Kidney (tissue), 22 donors: ENCODE measurements at regions of chr13 and their contacts with region 1.

Region 1: DNA sequence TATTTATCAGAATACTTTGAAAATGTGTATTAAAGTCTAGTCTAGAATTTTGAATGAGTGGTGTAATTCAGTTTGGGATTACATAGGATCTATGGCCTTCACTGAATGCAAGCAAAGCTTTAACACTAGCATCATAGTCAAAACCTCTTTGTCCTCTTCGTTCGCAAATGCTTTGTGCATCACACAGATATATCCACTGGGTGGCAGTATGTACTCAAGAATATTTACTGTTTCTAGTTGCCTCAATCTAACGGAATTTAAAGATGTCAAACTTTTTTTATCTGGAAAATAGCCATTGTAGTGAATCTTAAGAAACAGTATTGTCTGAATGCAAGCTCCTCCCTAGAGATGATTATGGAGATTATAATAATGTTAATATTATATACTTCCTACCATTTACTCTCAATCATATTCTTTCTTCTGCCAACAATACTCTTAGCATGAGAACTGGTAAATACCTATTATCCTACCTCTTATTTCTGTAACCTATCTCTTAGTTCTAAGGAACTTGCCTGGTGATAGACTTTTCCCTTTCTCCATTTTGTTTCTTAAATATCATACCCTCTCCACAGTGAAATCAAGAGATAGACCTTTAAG is 25.8 kb downstream of the LACC1 start:
- DNase-seq: peak in 4 of 5 donors; percentile 43 to 89 (median 66)
- H3K4me3 ChIP-seq: no peak overlapping the region
- H3K27ac ChIP-seq: no peak overlapping the region
- H3K4me1 ChIP-seq: no peaks in the 10 kb centered on the region
- H3K27me3 ChIP-seq: no peaks in the 10 kb centered on the region
- CTCF ChIP-seq: peak; percentile 93

Region 2: DNA sequence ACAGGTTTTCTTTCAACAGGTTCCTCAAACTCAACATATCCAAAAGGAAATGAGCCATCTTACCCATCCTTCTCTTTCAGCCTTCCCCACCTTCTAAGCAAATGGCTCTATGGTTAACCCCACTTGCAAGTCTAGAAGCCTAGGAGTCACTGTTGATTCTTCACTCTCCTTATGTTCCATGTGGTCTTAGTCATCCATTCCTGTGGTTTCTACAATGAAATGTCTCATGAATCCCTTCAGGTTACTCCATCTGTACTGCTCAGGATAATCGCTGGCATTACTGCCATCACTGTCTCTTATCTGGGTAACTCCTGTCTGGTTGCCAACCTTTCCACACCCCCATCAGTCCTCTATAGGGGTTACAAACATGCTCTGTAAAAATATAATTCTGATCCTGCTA is 500.1 kb before region 1 on chr13:
- intact Hi-C with region 1: no loop called
- DNase-seq: no peak
- H3K4me3 ChIP-seq: no peak overlapping the region
- H3K27ac ChIP-seq: no peak overlapping the region
- H3K4me1 ChIP-seq: no peaks in the 10 kb centered on the region
- H3K27me3 ChIP-seq: no peaks in the 10 kb centered on the region
- CTCF ChIP-seq: no peak

Region 3: GRCh38 chr13:43698758-43699157 is 206.8 kb before region 1 on chr13:
- intact Hi-C with region 1: no loop called
- DNase-seq: no peak
- H3K4me3 ChIP-seq: no peak overlapping the region
- H3K27ac ChIP-seq: no peak overlapping the region
- H3K4me1 ChIP-seq: no peaks in the 10 kb centered on the region
- H3K27me3 ChIP-seq: no peaks in the 10 kb centered on the region
- CTCF ChIP-seq: no peak

Region 4: DNA sequence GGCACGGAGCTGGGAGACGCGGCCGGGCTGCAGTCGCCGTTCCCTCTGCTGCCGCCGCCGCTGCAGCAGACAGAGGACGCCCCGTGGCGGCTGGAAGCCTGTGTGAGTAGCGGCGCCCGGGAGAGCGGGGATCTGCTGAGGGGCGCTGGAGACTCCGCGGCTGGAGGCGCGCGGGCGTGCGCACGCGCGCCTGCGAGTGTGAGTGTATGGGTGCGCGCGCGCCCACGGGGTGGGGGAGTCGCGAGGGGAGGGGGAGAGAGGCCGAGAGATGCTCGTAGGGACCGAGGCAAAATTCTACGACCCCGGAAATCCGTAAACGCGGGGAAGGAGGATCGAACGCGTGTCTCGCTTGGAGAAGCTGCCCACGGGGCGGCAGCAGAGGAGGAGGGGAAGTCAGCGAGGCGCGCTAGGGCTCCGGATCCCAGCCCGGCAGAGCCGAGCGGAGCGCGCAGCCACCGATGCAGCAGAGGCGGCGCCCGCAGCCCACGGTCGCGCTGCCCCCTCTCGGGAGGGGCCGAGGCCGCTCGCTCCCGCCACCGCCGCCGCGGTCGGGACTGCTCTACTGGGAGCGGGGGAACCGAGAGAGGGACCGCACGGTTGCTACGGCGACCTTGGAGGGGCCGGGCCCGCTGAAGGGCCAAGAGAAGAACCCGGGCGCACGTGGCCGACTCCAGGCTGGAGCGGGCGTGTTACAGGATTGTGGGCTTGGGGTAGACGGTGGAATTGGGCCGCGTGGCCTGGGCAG is 118.6 kb before region 1 on chr13 and contains the start of gene ENOX1:
- intact Hi-C with region 1: no loop called
- DNase-seq: peak; percentile 85 to 95 (median 91)
- H3K4me3 ChIP-seq: peak within 1 kb of the TSS; percentile 51 to 71 (median 59)
- H3K27ac ChIP-seq: peak within 1 kb of the TSS in 1 of 2 donors; percentile 19
- H3K4me1 ChIP-seq: peaks cover 0 to 6% (median 0%) of the 10 kb centered on the region in 3 donors
- H3K27me3 ChIP-seq: no peaks in the 10 kb centered on the region
- CTCF ChIP-seq: no peak
- total RNA-seq, gene ENOX1: 4.9 TPM

Region 5: DNA sequence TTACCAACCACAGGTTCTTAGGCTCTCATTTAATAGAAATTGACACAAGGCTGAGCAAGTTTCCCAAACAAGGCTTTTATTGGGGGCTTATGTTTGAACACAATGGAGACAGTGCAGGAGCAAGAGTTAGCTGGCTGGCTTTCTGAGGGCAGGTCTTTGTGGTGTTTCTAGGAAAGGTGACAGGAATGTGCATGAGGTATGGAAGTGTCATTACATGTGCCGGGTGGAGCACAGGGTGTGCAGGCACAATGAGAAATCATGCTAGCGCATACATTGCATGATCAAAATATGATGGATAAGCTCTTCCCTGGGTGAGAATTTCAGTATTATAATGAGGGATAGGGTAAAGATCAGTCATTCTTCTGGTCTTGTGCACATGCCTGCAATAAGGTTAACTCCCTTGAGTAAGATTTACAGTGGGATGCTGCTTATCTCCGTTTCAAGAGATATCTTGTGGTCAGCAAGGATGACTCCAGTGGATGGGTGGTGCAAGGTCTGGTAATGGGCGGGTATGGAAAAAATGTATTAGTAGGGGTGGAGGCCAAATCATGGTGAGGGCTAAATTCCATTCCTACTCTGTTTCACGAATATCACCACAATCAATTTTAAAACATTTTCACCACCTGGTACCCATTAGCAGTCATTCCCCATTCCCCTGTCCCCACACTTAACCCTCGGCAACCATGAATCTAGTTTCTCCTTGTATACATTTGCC is 66.8 kb before region 1 on chr13:
- intact Hi-C with region 1: no loop called
- DNase-seq: no peak
- H3K4me3 ChIP-seq: no peak overlapping the region
- H3K27ac ChIP-seq: no peak overlapping the region
- H3K4me1 ChIP-seq: no peaks in the 10 kb centered on the region
- H3K27me3 ChIP-seq: no peaks in the 10 kb centered on the region
- CTCF ChIP-seq: no peak

Region 6: DNA sequence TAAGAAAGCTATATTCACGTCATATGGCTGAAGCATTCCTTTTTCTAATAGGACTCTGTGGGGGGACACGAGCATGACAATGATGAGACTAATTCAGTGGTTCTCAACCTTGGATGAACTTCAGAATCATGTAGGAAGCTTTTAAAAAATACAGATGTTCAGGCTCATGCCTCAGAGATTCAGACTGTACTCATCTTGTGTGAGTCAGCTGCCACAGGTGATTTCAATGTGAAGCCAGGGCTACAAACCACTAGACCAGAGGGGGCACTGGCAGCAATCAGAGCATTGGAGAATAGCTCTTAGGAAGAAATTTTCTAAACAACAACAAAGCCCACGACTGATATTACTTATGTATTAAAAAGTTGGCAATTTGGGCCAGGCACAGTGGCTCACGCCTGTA is 559.8 kb after region 1 on chr13:
- intact Hi-C with region 1: loop called (anchors 10 kb)
- DNase-seq: no peak
- H3K4me3 ChIP-seq: no peak overlapping the region
- H3K27ac ChIP-seq: no peak overlapping the region
- H3K4me1 ChIP-seq: peaks cover 2 to 5% (median 4%) of the 10 kb centered on the region in 3 donors
- H3K27me3 ChIP-seq: no peaks in the 10 kb centered on the region
- CTCF ChIP-seq: no peak